ENCODE measurements at regions of chr10 and their contacts with region 1.

Region 1: GRCh38 chr10:101602761-101603398 is 14.8 kb downstream of the DPCD start:
- DNase-seq: peak; percentile 59 to 89
- H3K4me3 ChIP-seq: no peak overlapping the region
- CTCF ChIP-seq: peak in 1 of 3 donors; percentile 56
- POLR2A ChIP-seq: no peak

Region 2: GRCh38 chr10:101782811-101783735 is 180.2 kb after region 1 on chr10 and contains the start of gene NPM3:
- intact Hi-C with region 1: loop called (anchors 5 kb)
- DNase-seq: peak; percentile 81 to 95
- H3K4me3 ChIP-seq: peak within 1 kb of the TSS; percentile 31
- CTCF ChIP-seq: no peak
- POLR2A ChIP-seq: no peak
- total RNA-seq, gene NPM3: 24.6 to 37.7 (median 27.4) TPM

Region 3: GRCh38 chr10:102998005-102998404 is 1395.1 kb after region 1 on chr10:
- intact Hi-C with region 1: loop called (anchors 10 kb)
- DNase-seq: no peak
- H3K4me3 ChIP-seq: no peak overlapping the region
- CTCF ChIP-seq: no peak
- POLR2A ChIP-seq: no peak